CD4-positive, alpha-beta memory T cell (primary cell): ENCODE measurements at regions of chr9 and their contacts with region 1.

Region 1: DNA sequence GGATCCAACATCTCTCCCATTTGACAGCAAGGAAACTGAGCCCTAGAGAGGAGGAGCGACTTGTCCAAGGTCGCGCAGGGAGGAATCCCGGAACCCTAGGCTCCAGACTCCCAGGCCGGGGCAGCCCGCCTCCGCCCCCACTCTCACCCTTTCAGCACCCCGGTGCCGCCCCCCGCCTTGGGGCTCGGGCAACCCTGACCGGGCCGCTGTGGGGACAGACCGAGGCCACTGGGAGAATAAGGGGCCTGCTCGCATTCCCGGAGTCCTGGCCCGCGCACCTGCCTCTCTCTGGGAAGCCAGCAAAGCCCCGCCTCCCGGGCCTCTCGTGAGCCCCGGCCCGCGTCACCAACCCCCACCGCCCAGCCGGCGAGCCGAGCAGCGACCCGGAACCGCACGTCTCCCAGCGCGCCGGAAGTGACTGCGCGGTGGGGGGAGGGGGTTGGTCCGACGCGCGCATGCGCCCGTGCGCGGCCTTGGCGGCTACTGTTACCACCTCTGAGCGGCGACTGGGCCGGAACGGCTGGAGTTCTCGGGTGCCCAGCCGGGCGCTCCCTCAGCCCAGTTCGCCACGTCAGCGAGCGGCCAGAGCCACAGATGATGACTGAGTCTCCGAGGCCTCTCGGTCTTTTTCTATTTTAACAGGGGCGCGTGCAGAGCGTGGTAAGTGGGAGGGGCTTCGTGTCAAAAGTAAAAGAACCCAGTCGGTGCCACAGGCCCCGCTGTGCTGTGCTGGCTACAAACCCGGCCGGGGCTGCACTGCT is at the start of gene GOLGA1:
- DNase-seq: peak; percentile 93 to 95 (median 94)
- H3K4me3 ChIP-seq: peak within 1 kb of the TSS; percentile 94 to 99
- H3K4me3 Mint-ChIP-seq: peak within 1 kb of the TSS; percentile 91 to 97 (median 96)
- H3K27ac ChIP-seq: peak within 1 kb of the TSS; percentile 96
- H3K27ac Mint-ChIP-seq: peak within 1 kb of the TSS; percentile 86 to 99 (median 97)
- H3K4me1 ChIP-seq: peaks cover 18% of the 10 kb centered on the region
- H3K4me1 Mint-ChIP-seq: peaks cover 13 to 35% (median 27%) of the 10 kb centered on the region in 4 donors
- H3K27me3 ChIP-seq: no peaks in the 10 kb centered on the region
- H3K27me3 Mint-ChIP-seq: no peaks in the 10 kb centered on the region
- total RNA-seq, gene GOLGA1: 27.3 to 38.3 TPM

Region 2: DNA sequence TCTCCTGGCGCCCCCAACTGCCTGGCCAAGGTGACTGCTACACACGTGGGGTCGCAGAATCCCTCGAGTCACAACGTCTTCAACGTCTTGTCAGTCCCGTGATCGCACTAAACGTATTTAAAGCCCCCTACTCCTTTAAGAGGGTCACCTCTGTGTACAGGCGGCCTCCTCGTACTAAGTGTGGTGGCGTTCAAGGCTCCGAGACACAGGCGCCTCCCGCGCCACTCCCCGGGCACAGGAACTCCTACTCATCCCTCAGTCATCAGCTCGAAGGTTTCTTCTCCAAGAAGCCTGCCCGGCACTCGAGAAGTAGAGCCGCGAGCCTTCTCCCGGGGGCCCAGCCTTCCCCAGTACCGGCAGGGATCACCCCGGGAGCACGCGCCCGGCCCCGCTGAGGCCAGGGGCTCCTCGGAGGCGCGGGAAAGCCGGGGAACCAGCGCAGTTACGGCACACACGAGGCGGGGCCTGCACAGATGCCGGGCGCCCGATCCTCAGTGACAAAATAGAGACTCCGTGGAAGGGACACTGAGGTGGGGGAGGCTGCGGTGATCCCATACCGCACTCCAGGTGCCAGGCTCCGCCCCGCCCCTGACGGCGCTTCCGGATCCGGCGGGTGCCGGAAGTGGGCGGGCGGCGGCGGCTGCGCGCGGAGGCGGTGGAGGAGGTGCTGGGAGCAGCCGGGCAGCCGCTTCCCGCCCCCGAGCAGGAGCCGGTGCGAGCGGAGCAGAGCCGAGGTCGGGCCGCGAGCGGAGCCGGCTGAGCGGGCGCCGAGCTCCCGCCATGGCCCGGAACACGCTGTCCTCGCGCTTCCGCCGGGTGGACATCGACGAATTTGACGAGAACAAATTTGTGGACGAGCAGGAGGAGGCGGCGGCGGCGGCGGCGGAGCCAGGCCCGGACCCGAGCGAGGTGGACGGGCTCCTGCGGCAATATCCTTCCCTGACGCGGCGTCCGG is 72.1 kb before region 1 on chr9:
- CTCF ChIA-PET with region 1: no interaction called
- POLR2A ChIA-PET with region 1: interaction called, 3 read pairs
- intact Hi-C with region 1: loop called (anchors 1 kb)
- DNase-seq: peak; percentile 90 to 94 (median 92)
- H3K4me3 ChIP-seq: peak overlapping the region; percentile 58 to 85
- H3K4me3 Mint-ChIP-seq: peak overlapping the region; percentile 90 to 96 (median 93)
- H3K27ac ChIP-seq: peak overlapping the region; percentile 91
- H3K27ac Mint-ChIP-seq: peak overlapping the region; percentile 94 to 98 (median 95)
- H3K4me1 ChIP-seq: peaks cover 47% of the 10 kb centered on the region
- H3K4me1 Mint-ChIP-seq: peaks cover 29 to 64% (median 43%) of the 10 kb centered on the region in 4 donors
- H3K27me3 ChIP-seq: no peaks in the 10 kb centered on the region
- H3K27me3 Mint-ChIP-seq: no peaks in the 10 kb centered on the region

Region 3: GRCh38 chr9:124964604-124965003 is 23.7 kb after region 1 on chr9:
- CTCF ChIA-PET with region 1: interaction called, 5 read pairs
- POLR2A ChIA-PET with region 1: interaction called, 51 read pairs
- intact Hi-C with region 1: loop called (anchors 1 kb)
- DNase-seq: no peak
- H3K4me3 ChIP-seq: no peak overlapping the region
- H3K4me3 Mint-ChIP-seq: peak overlapping the region in 5 of 8 donors; percentile 12 to 51 (median 22)
- H3K27ac ChIP-seq: no peak overlapping the region
- H3K27ac Mint-ChIP-seq: peak overlapping the region; percentile 32 to 97 (median 80)
- H3K4me1 ChIP-seq: peaks cover 32% of the 10 kb centered on the region
- H3K4me1 Mint-ChIP-seq: peaks cover 22 to 34% (median 28%) of the 10 kb centered on the region in 4 donors
- H3K27me3 ChIP-seq: no peaks in the 10 kb centered on the region
- H3K27me3 Mint-ChIP-seq: no peaks in the 10 kb centered on the region

Region 4: DNA sequence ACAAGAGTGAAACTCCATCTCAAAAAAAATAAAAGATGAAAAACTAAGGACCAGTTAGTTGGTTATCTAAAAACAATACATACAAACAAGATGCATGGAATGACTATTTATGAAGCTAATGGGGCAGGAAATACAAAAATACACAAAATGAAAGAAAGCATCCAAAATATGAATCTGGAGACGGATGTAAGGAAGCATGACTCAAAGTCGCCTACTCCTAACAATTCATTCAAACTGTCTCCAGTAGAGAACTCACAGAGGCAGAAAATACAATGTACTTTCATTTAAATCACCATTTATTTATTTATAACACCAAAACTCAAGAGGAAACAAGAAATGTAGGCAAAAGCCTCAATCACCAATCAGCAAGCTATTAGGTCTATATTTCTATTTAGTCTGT is 134.1 kb after region 1 on chr9:
- CTCF ChIA-PET with region 1: no interaction called
- POLR2A ChIA-PET with region 1: no interaction called
- intact Hi-C with region 1: no loop called
- DNase-seq: no peak
- H3K4me3 ChIP-seq: no peak overlapping the region
- H3K4me3 Mint-ChIP-seq: no peak overlapping the region
- H3K27ac ChIP-seq: no peak overlapping the region
- H3K27ac Mint-ChIP-seq: no peak overlapping the region
- H3K4me1 ChIP-seq: no peaks in the 10 kb centered on the region
- H3K4me1 Mint-ChIP-seq: peaks cover 0 to 1% (median under 1%) of the 10 kb centered on the region in 4 donors
- H3K27me3 ChIP-seq: no peaks in the 10 kb centered on the region
- H3K27me3 Mint-ChIP-seq: no peaks in the 10 kb centered on the region

Region 5: GRCh38 chr9:125143375-125144090 is 202.7 kb after region 1 on chr9 and contains the start of gene SCAI:
- CTCF ChIA-PET with region 1: interaction called, 7 read pairs
- POLR2A ChIA-PET with region 1: interaction called, 16 read pairs
- intact Hi-C with region 1: loop called (anchors 1 kb)
- DNase-seq: peak; percentile 97 to 99 (median 99)
- H3K4me3 ChIP-seq: peak within 1 kb of the TSS in 1 of 2 donors; percentile 49
- H3K4me3 Mint-ChIP-seq: peak within 1 kb of the TSS; percentile 93 to 99 (median 98)
- H3K27ac ChIP-seq: peak within 1 kb of the TSS; percentile 16
- H3K27ac Mint-ChIP-seq: peak within 1 kb of the TSS; percentile 85 to 95 (median 91)
- H3K4me1 ChIP-seq: peaks cover 22% of the 10 kb centered on the region
- H3K4me1 Mint-ChIP-seq: peaks cover 17 to 34% (median 26%) of the 10 kb centered on the region in 4 donors
- H3K27me3 ChIP-seq: no peaks in the 10 kb centered on the region
- H3K27me3 Mint-ChIP-seq: no peaks in the 10 kb centered on the region
- total RNA-seq, gene SCAI: 14.7 to 15.5 TPM